Activated naive CD4-positive, alpha-beta T cell treated with anti-CD3 and anti-CD28 coated beads for 36 hours (primary cell): ENCODE measurements at regions of chr5 and their contacts with region 1.

Region 1: DNA sequence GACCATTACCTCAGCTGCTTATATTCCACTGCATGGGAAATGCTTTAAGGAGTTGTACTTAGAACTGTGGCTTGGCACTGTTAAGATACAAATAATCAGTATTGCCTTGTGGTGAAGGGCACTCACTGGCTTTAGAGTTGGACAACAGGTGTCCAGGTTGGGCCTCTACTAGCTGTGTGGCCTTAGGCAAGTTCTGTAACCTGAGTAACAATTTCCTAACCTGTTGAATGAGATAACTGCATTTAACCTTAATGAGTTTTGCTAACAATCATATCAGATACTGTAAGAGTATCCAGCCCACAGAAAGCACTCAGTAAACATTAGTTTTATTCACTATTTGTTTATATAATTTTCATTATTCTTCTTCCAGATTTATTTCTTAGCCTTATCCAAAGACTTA is 17.2 kb upstream of the HK3 start:
- DNase-seq: no peak
- H3K4me3 Mint-ChIP-seq: no peak overlapping the region
- H3K27ac Mint-ChIP-seq: no peak overlapping the region
- H3K4me1 Mint-ChIP-seq: peaks cover 3% of the 10 kb centered on the region
- H3K27me3 Mint-ChIP-seq: no peaks in the 10 kb centered on the region

Region 2: DNA sequence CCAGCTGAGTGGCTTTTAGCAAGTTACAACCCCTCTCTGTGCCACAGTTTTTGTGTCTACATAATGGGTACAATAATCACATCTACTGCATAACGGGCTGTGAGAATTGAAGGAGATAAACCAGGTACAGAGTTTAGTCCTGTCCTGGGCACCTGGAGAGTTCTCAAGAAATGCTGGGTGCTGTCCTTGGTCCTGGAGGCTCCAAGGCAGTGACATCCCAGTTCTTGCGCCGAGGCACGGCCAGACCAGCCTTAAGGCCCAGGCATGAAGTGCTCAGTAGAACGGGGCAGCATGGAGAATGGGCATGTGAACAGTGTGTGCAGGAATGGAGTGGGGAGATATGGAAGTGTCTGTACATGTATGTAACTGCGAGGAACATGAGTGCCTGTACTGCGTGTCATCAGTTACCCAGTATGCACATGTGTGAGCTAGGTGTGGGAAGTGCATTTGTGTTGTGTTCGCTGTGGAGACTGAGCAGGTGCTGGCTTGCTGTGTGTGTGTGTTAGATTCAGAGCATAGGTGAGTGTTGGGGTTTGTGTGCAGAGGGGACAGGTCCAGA is 112.3 kb before region 1 on chr5:
- CTCF ChIA-PET with region 1: no interaction called
- intact Hi-C with region 1: no loop called
- DNase-seq: peak; percentile 43
- H3K4me3 Mint-ChIP-seq: no peak overlapping the region
- H3K27ac Mint-ChIP-seq: no peak overlapping the region
- H3K4me1 Mint-ChIP-seq: peaks cover under 1% of the 10 kb centered on the region
- H3K27me3 Mint-ChIP-seq: peaks cover 41% of the 10 kb centered on the region

Region 3: DNA sequence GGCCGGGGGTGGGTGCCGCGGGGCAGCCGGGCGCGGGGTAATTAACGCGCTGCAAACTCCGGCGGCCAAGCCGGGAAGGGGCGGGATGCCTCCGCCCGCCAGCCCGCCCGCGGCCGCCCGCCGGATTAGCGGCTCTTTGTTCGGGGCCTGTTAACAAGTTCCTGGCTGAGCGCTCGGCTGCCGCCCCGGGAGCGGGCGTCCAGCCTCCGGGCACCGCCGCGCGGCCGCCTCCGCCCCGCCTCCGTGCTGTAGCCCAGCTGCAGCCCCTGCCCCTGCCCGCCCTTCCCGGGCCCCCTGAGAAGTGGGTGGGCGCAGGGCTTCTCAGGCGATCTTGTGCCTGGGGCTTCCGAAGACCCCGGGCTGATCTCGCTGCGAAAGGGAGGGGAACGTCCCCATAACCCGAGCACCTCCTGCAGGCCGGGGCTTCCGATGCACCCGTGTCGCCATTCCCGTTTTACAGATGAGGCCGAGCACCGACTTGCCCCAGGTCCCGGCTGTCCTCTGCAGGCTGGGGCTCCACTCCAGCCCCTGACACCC is 98.4 kb before region 1 on chr5:
- CTCF ChIA-PET with region 1: no interaction called
- intact Hi-C with region 1: loop called (anchors 10 kb)
- DNase-seq: peak; percentile 36
- H3K4me3 Mint-ChIP-seq: peak overlapping the region; percentile 27
- H3K27ac Mint-ChIP-seq: no peak overlapping the region
- H3K4me1 Mint-ChIP-seq: peaks cover 10% of the 10 kb centered on the region
- H3K27me3 Mint-ChIP-seq: peaks cover 60% of the 10 kb centered on the region